ENCODE measurements at regions of chr17 and their contacts with region 1.

Region 1: DNA sequence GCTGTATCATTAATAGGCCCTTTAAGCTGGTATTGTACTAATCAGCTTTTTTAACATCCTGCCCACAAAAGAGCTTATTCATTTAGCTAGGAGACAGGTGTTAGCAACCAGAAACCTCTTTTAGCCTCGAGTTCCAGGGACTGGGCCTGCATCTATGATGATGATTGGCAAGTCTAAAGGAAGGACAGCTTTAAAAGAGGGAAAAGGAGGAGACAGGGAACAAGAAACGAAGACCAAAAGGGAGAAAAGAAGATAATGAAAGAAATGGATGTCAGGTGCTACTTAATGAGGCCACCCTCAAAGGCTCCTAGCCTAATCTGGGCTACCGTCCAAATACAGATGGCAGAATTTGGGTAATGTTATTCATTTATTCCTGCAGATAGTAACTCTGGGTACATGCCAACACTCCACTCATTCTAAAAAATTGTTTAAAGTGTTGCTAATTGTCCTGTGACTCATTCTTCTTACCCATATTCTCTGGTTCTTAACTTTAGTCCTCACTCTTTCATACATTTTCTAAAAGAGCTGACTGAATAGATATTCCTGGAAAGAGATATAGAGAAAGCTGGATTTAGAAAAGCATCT is 18.7 kb upstream of the RFFL start:
- DNase-seq: peak in 3 of 14 experiments; percentile 14 to 65 (median 32)
- ATAC-seq: peak; percentile 60
- H3K4me3 ChIP-seq: no peak overlapping the region
- H3K4me3 Mint-ChIP-seq: peak overlapping the region; percentile 76
- H3K27ac ChIP-seq: peak overlapping the region; percentile 46 to 64
- H3K27ac Mint-ChIP-seq: peak overlapping the region; percentile 79
- H3K4me1 ChIP-seq: peaks cover 46% of the 10 kb centered on the region
- H3K4me1 Mint-ChIP-seq: peaks cover 78% of the 10 kb centered on the region
- H3K27me3 ChIP-seq: no peaks in the 10 kb centered on the region
- H3K27me3 Mint-ChIP-seq: no peaks in the 10 kb centered on the region
- CTCF ChIP-seq: no peak

Region 2: DNA sequence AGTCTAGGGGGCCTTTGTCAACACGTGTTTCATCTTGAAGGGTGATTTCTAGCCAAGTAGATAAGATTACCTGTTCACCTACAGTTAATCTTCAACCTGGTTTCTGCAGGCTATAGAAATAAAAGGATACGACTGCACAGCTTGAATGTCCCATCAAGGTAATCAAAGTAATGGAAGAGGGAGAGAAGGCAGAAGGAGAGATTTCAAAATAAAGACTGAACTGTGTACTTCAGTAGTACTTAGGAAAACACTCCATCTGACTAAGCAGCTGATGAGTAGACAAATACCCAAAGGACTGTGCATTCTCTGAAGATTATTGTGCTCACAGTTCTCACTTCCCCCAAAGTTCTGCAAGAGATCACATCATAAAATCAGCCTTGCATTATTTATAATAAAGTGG is 12.9 kb before region 1 on chr17:
- CTCF ChIA-PET with region 1: interaction called, 9 read pairs
- POLR2A ChIA-PET with region 1: interaction called, 17 read pairs
- intact Hi-C with region 1: loop called (anchors 1 to 2 kb)
- DNase-seq: no peak
- ATAC-seq: no peak
- H3K4me3 ChIP-seq: no peak overlapping the region
- H3K4me3 Mint-ChIP-seq: no peak overlapping the region
- H3K27ac ChIP-seq: no peak overlapping the region
- H3K27ac Mint-ChIP-seq: peak overlapping the region; percentile 46
- H3K4me1 ChIP-seq: peaks cover 48% of the 10 kb centered on the region
- H3K4me1 Mint-ChIP-seq: peaks cover 80% of the 10 kb centered on the region
- H3K27me3 ChIP-seq: no peaks in the 10 kb centered on the region
- H3K27me3 Mint-ChIP-seq: no peaks in the 10 kb centered on the region
- CTCF ChIP-seq: no peak

Region 3: DNA sequence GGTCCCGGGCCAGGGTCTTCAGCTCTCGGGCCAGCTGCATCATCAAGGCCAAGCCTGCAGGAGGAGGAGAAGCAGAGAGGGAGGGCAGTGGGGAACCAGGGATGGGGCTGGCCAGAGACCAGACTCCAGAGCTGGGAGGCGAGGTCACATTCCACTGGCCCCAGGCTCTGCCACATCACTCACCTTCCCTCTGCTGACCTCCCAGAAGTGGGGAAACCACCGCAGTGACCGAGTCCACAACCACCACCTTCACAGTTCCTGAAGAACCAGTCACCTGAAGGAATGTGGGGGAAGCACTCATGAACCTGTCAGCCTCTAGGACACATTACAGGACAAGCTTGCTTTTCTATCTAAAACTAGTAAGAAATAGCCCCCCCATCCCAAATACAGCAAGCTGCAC is 21.1 kb after region 1 on chr17:
- CTCF ChIA-PET with region 1: no interaction called
- POLR2A ChIA-PET with region 1: no interaction called
- intact Hi-C with region 1: no loop called
- DNase-seq: no peak
- ATAC-seq: no peak
- H3K4me3 ChIP-seq: no peak overlapping the region
- H3K4me3 Mint-ChIP-seq: no peak overlapping the region
- H3K27ac ChIP-seq: no peak overlapping the region
- H3K27ac Mint-ChIP-seq: no peak overlapping the region
- H3K4me1 ChIP-seq: no peaks in the 10 kb centered on the region
- H3K4me1 Mint-ChIP-seq: no peaks in the 10 kb centered on the region
- H3K27me3 ChIP-seq: no peaks in the 10 kb centered on the region
- H3K27me3 Mint-ChIP-seq: no peaks in the 10 kb centered on the region
- CTCF ChIP-seq: no peak

Measured in CD4-positive, alpha-beta T cell (primary cell).